CD4-positive, alpha-beta memory T cell (primary cell): ENCODE measurements at regions of chr6 and their contacts with region 1.

Region 1: GRCh38 chr6:118697554-118697953 is 46.2 kb upstream of the CEP85L start:
- DNase-seq: no peak
- H3K4me3 ChIP-seq: no peak overlapping the region
- H3K4me3 Mint-ChIP-seq: no peak overlapping the region
- H3K27ac ChIP-seq: no peak overlapping the region
- H3K27ac Mint-ChIP-seq: peak overlapping the region in 2 of 7 donors; percentile 0 to 23
- H3K4me1 ChIP-seq: peaks cover 64% of the 10 kb centered on the region
- H3K4me1 Mint-ChIP-seq: peaks cover 49 to 88% (median 65%) of the 10 kb centered on the region in 4 donors
- H3K27me3 ChIP-seq: no peaks in the 10 kb centered on the region
- H3K27me3 Mint-ChIP-seq: no peaks in the 10 kb centered on the region

Region 2: DNA sequence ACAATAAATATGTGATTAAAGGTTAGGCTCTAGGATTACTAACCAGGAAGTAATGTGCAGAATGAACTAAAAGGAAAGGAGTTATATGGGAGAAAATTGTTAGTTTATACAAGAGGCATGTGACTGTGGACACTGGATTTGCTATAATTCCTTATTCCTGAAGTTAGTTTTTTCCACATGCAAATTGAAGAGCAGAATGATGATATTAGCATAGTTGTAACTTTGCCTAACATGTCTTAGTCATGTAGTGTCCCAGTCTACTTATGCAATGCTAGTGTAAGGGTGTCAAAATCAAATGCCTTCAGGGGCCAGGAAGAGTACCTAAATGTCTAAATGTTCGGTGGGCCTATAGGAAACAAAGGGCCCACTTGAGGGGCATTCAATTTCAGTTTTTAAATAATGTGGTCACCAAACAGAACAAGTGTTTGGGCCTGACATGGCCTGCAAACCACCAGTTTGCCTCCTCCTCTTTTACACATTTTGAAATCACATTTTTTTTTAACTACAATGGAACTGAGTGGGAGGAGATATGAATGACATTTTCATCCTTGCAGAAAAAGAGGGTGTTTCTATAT is 18.1 kb before region 1 on chr6:
- CTCF ChIA-PET with region 1: interaction called, 14 read pairs
- POLR2A ChIA-PET with region 1: interaction called, 8 read pairs
- intact Hi-C with region 1: no loop called
- DNase-seq: no peak
- H3K4me3 ChIP-seq: no peak overlapping the region
- H3K4me3 Mint-ChIP-seq: peak overlapping the region in 4 of 8 donors; percentile 8 to 59 (median 48)
- H3K27ac ChIP-seq: no peak overlapping the region
- H3K27ac Mint-ChIP-seq: peak overlapping the region in 4 of 7 donors; percentile 16 to 54 (median 32)
- H3K4me1 ChIP-seq: peaks cover 50% of the 10 kb centered on the region
- H3K4me1 Mint-ChIP-seq: peaks cover 54 to 72% (median 66%) of the 10 kb centered on the region in 4 donors
- H3K27me3 ChIP-seq: no peaks in the 10 kb centered on the region
- H3K27me3 Mint-ChIP-seq: no peaks in the 10 kb centered on the region

Region 3: GRCh38 chr6:118768904-118769325 is 71.4 kb after region 1 on chr6:
- CTCF ChIA-PET with region 1: interaction called, 18 read pairs
- POLR2A ChIA-PET with region 1: interaction called, 4 read pairs
- intact Hi-C with region 1: no loop called
- DNase-seq: peak in 4 of 5 donors; percentile 21 to 31 (median 30)
- H3K4me3 ChIP-seq: no peak overlapping the region
- H3K4me3 Mint-ChIP-seq: peak overlapping the region in 7 of 8 donors; percentile 23 to 71 (median 48)
- H3K27ac ChIP-seq: peak overlapping the region; percentile 14
- H3K27ac Mint-ChIP-seq: peak overlapping the region; percentile 74 to 89 (median 81)
- H3K4me1 ChIP-seq: peaks cover 18% of the 10 kb centered on the region
- H3K4me1 Mint-ChIP-seq: peaks cover 11 to 31% (median 23%) of the 10 kb centered on the region in 4 donors
- H3K27me3 ChIP-seq: no peaks in the 10 kb centered on the region
- H3K27me3 Mint-ChIP-seq: no peaks in the 10 kb centered on the region

Region 4: GRCh38 chr6:118776607-118777549 is 79.3 kb after region 1 on chr6:
- CTCF ChIA-PET with region 1: interaction called, 18 read pairs
- POLR2A ChIA-PET with region 1: no interaction called
- intact Hi-C with region 1: no loop called
- DNase-seq: peak; percentile 63 to 73 (median 71)
- H3K4me3 ChIP-seq: no peak overlapping the region
- H3K4me3 Mint-ChIP-seq: peak overlapping the region in 6 of 8 donors; percentile 2 to 71 (median 50)
- H3K27ac ChIP-seq: no peak overlapping the region
- H3K27ac Mint-ChIP-seq: peak overlapping the region; percentile 16 to 90 (median 74)
- H3K4me1 ChIP-seq: peaks cover 21% of the 10 kb centered on the region
- H3K4me1 Mint-ChIP-seq: peaks cover 17 to 26% (median 21%) of the 10 kb centered on the region in 4 donors
- H3K27me3 ChIP-seq: no peaks in the 10 kb centered on the region
- H3K27me3 Mint-ChIP-seq: no peaks in the 10 kb centered on the region